Transverse colon (tissue), 4 donors: ENCODE measurements at regions of chr11 and their contacts with region 1.

Region 1: DNA sequence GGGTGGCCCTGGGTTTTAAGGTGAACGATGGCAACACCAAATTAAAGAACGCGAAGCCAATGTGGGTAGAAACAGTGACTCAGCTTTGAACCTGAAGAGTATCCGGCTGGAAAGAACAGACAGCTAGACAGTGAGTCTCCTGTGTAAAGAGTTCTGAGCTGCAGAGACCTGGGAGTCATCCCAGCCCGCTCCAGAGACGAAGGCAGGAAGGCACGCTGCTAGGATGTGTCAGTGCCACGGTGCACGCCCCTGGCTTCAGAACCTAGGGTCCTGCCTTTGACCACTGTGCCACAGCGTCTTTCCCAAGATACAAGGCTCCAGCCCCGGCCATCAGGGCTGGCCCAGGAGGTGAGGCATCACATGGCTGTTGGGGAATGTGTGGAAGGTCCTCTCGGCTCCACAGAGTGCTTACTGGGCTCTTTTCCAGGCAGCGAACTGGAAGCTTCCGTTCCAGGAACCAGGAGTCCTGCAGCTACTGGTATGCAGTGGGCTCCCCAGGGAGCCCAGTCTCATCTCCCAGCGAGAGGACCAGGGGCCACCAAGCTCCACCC is 29.9 kb downstream of the LRFN4 start:
- DNase-seq: no peak
- H3K4me3 ChIP-seq: no peak overlapping the region
- H3K27ac ChIP-seq: no peak overlapping the region
- H3K4me1 ChIP-seq: peaks cover 0 to 13% (median 4%) of the 10 kb centered on the region in 4 donors
- H3K27me3 ChIP-seq: no peaks in the 10 kb centered on the region
- CTCF ChIP-seq: no peak
- EP300 ChIP-seq: no peak
- POLR2A ChIP-seq: no peak

Region 2: DNA sequence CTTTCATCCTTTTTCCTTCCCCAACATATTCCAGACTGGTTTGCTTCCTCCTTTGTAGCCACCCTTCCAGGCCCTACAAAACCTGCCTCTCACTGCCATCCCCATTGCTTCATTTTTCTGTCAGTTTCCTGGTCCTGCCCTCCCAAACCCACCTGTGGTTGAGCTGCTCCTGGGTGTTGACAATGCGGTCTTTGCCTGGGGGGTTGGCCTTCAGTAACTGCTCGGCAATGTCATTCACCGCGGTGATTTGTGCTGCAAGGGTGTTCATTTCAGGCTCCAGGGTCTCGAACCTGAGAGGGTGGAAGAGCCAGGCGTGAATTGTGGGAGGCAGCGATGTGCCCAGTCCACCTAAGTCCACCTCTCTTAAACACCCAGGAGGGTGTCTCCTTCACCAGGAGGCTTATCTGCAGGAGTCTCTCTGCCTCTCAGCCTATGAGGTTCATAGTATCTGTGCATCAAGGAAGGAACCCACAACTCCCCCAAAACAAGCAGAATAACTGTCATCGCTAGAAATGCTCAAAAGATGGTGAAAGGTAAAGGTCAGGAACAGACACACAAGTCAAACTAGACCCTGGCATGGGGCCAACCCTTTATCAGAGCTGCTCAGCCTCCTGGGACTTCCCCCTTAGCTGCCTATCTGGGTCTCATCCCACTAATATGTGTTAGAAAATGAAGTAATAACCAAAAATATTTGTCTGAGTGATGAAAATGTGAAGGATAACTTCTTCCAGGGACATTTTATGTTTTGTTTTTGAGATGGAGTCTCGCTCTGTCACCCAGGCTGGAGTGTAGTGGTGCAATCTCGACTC is 185.1 kb before region 1 on chr11:
- in situ Hi-C with region 1: no loop called
- intact Hi-C with region 1: loop called (anchors 5 kb)
- DNase-seq: no peak
- H3K4me3 ChIP-seq: no peak overlapping the region
- H3K27ac ChIP-seq: no peak overlapping the region
- H3K4me1 ChIP-seq: no peaks in the 10 kb centered on the region
- H3K27me3 ChIP-seq: no peaks in the 10 kb centered on the region
- CTCF ChIP-seq: no peak
- EP300 ChIP-seq: no peak
- POLR2A ChIP-seq: no peak

Region 3: GRCh38 chr11:66841861-66842260 is 44.9 kb before region 1 on chr11:
- in situ Hi-C with region 1: no loop called
- intact Hi-C with region 1: no loop called
- DNase-seq: no peak
- H3K4me3 ChIP-seq: peak overlapping the region in 3 of 4 donors; percentile 88 to 98 (median 94)
- H3K27ac ChIP-seq: peak overlapping the region; percentile 97 to 99 (median 99)
- H3K4me1 ChIP-seq: peaks cover 18 to 39% (median 24%) of the 10 kb centered on the region in 4 donors
- H3K27me3 ChIP-seq: no peaks in the 10 kb centered on the region
- CTCF ChIP-seq: no peak
- EP300 ChIP-seq: no peak
- POLR2A ChIP-seq: no peak

Region 4: GRCh38 chr11:66851698-66852465 is 34.9 kb before region 1 on chr11:
- in situ Hi-C with region 1: no loop called
- intact Hi-C with region 1: no loop called
- DNase-seq: peak; percentile 8
- H3K4me3 ChIP-seq: no peak overlapping the region
- H3K27ac ChIP-seq: no peak overlapping the region
- H3K4me1 ChIP-seq: peaks cover 6 to 8% (median 7%) of the 10 kb centered on the region in 4 donors
- H3K27me3 ChIP-seq: no peaks in the 10 kb centered on the region
- CTCF ChIP-seq: peak in 1 of 5 experiments; percentile 6
- EP300 ChIP-seq: no peak
- POLR2A ChIP-seq: no peak

Region 5: DNA sequence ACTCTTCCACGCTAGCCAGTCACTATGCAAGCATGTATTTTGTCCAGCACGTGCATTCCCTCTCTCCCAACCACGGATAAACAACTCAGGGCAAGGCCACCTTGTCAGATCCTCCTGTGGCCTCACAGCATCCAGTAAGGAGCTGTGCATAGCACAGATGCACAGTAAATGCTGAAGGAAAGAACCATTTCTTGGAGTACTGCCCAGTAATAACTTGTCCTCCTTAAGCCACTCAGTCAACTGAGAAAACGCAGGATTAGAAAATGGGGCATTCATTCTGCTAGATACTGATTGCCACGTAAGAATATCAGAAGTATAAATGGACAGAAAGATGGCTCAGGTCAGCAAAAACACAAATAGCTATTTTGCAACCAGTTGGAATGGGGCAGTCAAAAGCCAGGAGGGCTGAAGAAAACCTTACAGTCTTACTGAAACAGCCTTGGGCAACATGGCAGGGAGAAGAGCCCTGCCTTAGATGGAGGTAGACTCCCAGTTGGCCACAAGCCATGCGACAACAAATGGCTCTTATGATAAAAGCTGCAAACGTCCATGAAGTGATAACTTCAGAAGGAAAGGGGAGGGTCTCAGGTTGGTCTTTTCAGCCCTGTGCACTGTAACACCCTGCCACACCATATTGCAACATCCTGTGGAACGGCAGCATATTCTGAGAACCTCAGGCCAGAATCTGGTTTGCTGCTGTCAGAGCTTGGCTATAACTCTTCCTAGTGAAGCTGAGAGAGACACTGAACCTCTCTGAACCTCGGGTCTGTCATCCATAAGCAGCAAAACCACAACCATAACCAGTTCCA is 48.4 kb after region 1 on chr11:
- in situ Hi-C with region 1: no loop called
- intact Hi-C with region 1: no loop called
- DNase-seq: no peak
- H3K4me3 ChIP-seq: no peak overlapping the region
- H3K27ac ChIP-seq: no peak overlapping the region
- H3K4me1 ChIP-seq: no peaks in the 10 kb centered on the region
- H3K27me3 ChIP-seq: no peaks in the 10 kb centered on the region
- CTCF ChIP-seq: no peak
- EP300 ChIP-seq: no peak
- POLR2A ChIP-seq: no peak